ENCODE measurements at regions of chr13 and their contacts with region 1.

Region 1: DNA sequence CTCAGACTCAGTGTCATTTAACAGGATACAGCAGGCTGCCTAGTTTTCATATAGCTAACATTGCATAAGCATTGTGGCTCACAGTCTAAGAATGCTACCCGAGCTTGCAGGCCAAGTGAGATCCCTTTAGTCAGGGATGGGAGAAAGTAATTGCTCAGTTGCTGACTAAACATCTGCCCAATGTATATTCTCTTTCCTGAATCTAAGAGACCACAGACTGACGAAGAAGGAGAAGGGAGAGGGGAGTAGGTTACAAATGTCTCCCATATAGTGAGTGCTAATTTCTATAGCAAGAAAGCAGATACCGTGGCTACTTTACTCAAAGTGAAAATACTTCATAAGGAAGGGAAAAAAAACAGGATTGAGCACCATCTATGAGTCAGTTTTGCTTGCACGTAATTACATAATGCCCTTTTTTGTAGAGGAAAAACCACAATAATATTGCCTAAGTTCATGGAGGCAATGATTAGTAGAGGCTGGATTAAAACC is 453.9 kb downstream of the COG6 start:
- DNase-seq: peak; percentile 97
- H3K4me3 ChIP-seq: peak overlapping the region; percentile 12 to 36 (median 28)
- H3K27ac ChIP-seq: peak overlapping the region; percentile 92
- H3K4me1 ChIP-seq: peaks cover 21% of the 10 kb centered on the region
- H3K27me3 ChIP-seq: no peaks in the 10 kb centered on the region
- CTCF ChIP-seq: no peak

Region 2: DNA sequence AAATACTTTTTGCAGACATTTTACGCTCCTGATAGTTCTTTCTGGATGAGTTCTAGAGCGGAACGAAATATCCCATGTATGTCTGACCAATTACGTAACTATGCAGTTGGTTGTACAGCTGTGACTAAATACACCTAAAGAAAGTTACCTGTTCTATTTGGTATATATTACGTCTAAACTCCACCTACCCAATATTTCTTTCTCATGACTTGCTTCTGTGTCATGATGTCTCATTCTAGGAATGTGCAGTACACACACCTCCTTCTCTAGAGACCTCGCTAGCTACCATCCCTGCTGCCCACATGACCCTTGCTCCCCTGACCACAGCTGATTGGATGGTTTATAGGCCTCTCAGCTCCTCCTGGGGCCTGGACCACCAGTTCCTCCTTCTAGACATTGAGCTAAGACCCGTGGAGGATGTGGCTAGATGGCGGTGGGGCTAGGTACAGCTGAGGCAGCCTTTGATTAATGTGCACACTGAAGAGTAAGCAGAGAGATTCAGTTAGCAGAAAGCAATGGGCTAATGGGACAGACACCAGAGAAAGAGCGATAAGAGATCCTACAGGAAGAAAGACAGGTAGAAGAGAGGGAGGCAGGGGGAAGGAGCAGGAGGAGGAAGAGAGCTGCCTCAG is 31.9 kb before region 1 on chr13:
- CTCF ChIA-PET with region 1: no interaction called
- dilution Hi-C with region 1: no loop called
- in situ Hi-C with region 1: no loop called
- intact Hi-C with region 1: loop called (anchors 1 kb)
- DNase-seq: peak; percentile 83
- H3K4me3 ChIP-seq: no peak overlapping the region
- H3K27ac ChIP-seq: peak overlapping the region; percentile 17
- H3K4me1 ChIP-seq: peaks cover 15% of the 10 kb centered on the region
- H3K27me3 ChIP-seq: no peaks in the 10 kb centered on the region
- CTCF ChIP-seq: no peak

Region 3: GRCh38 chr13:40251343-40252032 is 142.1 kb after region 1 on chr13:
- CTCF ChIA-PET with region 1: no interaction called
- dilution Hi-C with region 1: no loop called
- in situ Hi-C with region 1: no loop called
- intact Hi-C with region 1: no loop called
- DNase-seq: peak; percentile 60
- H3K4me3 ChIP-seq: no peak overlapping the region
- H3K27ac ChIP-seq: no peak overlapping the region
- H3K4me1 ChIP-seq: peaks cover 19% of the 10 kb centered on the region
- H3K27me3 ChIP-seq: no peaks in the 10 kb centered on the region
- CTCF ChIP-seq: no peak

Measured in mammary epithelial cell (primary cell).